AG04450 (cell line): ENCODE measurements at regions of chr11 and their contacts with region 1.

Region 1: DNA sequence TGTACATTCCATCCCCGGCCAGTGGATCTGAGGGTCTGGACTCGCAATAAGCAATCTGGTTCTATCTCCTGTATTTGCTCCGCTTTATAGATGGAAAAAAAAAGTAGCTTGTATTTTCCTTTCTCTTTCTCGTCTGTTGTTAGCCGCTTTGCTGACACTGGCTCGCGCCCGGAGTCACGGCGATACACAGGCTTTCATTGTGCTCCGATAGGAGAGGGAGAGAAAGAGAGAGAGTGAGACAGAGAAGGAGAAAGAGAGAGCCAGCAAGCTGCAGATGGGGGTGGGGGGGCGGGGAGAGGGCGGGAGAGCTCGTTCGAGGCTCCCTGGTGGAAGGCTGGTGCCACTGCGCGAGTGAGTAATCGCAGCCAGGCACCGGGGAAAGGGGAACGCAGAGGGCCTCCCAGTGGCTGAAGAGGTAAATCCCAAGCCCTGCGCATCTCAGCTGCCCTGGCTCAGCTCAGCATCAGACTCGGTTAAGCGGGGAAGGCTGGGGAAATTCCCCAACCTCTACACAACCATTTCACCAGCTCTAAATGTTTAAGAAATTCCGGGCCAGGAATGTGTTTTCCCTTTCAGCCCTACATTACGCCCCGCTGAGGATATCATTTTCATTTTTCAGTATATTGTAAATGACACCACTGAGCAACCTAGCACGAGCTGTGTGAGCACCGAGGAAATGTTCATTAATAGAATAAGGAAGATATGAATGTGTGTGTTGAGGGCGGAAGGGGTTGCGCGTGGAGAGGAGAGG is at the start of gene MAML2:
- DNase-seq: peak; percentile 89
- H3K4me3 ChIP-seq: peak within 1 kb of the TSS; percentile 81
- H3K27ac ChIP-seq: peak within 1 kb of the TSS; percentile 40
- H3K27me3 ChIP-seq: no peaks in the 10 kb centered on the region
- CTCF ChIP-seq: peak; percentile 93
- polyA plus RNA-seq, gene MAML2: 23.0 TPM in 2 replicates

Region 2: GRCh38 chr11:95917193-95918036 is 425.7 kb before region 1 on chr11:
- CTCF ChIA-PET with region 1: interaction called, 11 read pairs
- POLR2A ChIA-PET with region 1: no interaction called
- DNase-seq: no peak
- H3K4me3 ChIP-seq: no peak overlapping the region
- H3K27ac ChIP-seq: no peak overlapping the region
- H3K27me3 ChIP-seq: no peaks in the 10 kb centered on the region
- CTCF ChIP-seq: no peak

Region 3: DNA sequence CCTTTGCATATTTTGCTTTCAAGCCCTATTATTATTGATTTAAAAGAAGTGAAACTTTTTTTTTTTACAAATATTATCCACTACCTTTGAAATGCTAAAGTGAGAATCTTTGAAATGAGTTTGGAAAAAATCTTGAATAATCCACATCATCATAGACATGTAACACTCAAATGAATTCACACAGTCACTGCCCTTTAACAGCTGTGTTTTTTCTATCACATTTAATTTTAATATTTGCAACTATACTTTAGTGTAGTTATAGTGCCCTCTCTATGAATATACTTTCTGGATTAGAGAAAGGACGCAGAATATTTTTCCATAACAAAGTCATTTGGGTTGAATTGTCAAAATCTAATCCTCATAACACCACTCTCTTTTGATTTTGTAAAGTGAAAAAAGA is 381.4 kb before region 1 on chr11:
- CTCF ChIA-PET with region 1: no interaction called
- POLR2A ChIA-PET with region 1: no interaction called
- DNase-seq: no peak
- H3K4me3 ChIP-seq: no peak overlapping the region
- H3K27ac ChIP-seq: no peak overlapping the region
- H3K27me3 ChIP-seq: no peaks in the 10 kb centered on the region
- CTCF ChIP-seq: no peak

Region 4: GRCh38 chr11:96075532-96075959 is 267.6 kb before region 1 on chr11:
- CTCF ChIA-PET with region 1: interaction called, 10 read pairs
- POLR2A ChIA-PET with region 1: interaction called, 3 read pairs
- DNase-seq: no peak
- H3K4me3 ChIP-seq: no peak overlapping the region
- H3K27ac ChIP-seq: no peak overlapping the region
- H3K27me3 ChIP-seq: no peaks in the 10 kb centered on the region
- CTCF ChIP-seq: no peak

Region 5: DNA sequence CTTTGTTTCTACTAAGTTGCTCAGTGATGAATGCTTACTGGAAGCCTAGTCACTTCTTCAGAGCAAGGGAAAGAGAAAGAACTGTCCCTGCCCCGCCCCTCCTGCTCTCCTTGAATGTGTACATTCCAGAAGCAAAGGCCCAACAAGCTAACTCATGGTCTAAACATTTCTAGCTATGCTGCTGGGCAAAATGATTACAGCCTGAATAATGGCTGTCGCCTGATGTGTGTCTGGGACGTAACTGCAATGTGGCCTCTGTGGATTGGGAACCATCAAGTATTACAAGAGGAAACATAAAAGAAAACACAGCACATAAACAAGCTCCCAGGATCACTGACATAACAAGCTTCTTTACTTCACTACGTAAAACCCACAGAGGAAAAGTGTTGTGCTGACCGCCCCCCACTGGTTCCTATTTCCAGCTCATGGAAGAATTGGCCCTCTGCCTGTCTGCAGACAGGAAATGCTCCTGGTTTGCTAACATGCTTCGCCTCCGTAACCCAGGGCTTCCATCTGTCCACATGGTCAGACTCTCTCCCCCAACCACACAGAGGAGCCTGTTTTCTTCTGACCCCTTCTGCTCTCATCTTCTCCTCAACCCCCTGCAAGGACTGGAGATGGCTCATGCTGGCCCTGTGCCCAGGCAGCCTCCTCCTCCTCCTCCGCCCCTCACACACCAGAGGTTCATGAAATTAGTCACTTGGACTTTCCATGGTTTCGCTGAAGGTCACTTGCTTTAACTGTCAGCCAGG is 187.3 kb before region 1 on chr11:
- CTCF ChIA-PET with region 1: interaction called, 16 read pairs
- POLR2A ChIA-PET with region 1: interaction called, 5 read pairs
- DNase-seq: peak; percentile 88
- H3K4me3 ChIP-seq: peak overlapping the region; percentile 43
- H3K27ac ChIP-seq: peak overlapping the region; percentile 98
- H3K27me3 ChIP-seq: no peaks in the 10 kb centered on the region
- CTCF ChIP-seq: peak; percentile 49

Region 6: GRCh38 chr11:96235751-96236150 is 107.4 kb before region 1 on chr11:
- CTCF ChIA-PET with region 1: interaction called, 40 read pairs
- POLR2A ChIA-PET with region 1: interaction called, 3 read pairs
- DNase-seq: no peak
- H3K4me3 ChIP-seq: no peak overlapping the region
- H3K27ac ChIP-seq: no peak overlapping the region
- H3K27me3 ChIP-seq: no peaks in the 10 kb centered on the region
- CTCF ChIP-seq: peak; percentile 16; the same call in 1 of the 2 replicates

Region 7: GRCh38 chr11:96306933-96307775 is 36.0 kb before region 1 on chr11:
- CTCF ChIA-PET with region 1: interaction called, 63 read pairs
- POLR2A ChIA-PET with region 1: interaction called, 6 read pairs
- DNase-seq: peak; percentile 93
- H3K4me3 ChIP-seq: peak overlapping the region; percentile 51
- H3K27ac ChIP-seq: peak overlapping the region; percentile 93
- H3K27me3 ChIP-seq: no peaks in the 10 kb centered on the region
- CTCF ChIP-seq: no peak

Region 8: GRCh38 chr11:96366024-96366423 is 22.9 kb after region 1 on chr11:
- CTCF ChIA-PET with region 1: interaction called, 11 read pairs
- POLR2A ChIA-PET with region 1: no interaction called
- DNase-seq: no peak
- H3K4me3 ChIP-seq: no peak overlapping the region
- H3K27ac ChIP-seq: no peak overlapping the region
- H3K27me3 ChIP-seq: no peaks in the 10 kb centered on the region
- CTCF ChIP-seq: no peak